Prostate gland (tissue), 2 donors: ENCODE measurements at regions of chr17 and their contacts with region 1.

Region 1: GRCh38 chr17:69523244-69523861 is 108.9 kb downstream of the MAP2K6 start:
- DNase-seq: peak; percentile 37
- H3K4me3 ChIP-seq: no peak overlapping the region
- H3K27ac ChIP-seq: no peak overlapping the region
- H3K4me1 ChIP-seq: no peaks in the 10 kb centered on the region
- H3K27me3 ChIP-seq: no peaks in the 10 kb centered on the region
- CTCF ChIP-seq: peak; percentile 42 to 77 (median 74)
- POLR2A ChIP-seq: no peak

Region 2: DNA sequence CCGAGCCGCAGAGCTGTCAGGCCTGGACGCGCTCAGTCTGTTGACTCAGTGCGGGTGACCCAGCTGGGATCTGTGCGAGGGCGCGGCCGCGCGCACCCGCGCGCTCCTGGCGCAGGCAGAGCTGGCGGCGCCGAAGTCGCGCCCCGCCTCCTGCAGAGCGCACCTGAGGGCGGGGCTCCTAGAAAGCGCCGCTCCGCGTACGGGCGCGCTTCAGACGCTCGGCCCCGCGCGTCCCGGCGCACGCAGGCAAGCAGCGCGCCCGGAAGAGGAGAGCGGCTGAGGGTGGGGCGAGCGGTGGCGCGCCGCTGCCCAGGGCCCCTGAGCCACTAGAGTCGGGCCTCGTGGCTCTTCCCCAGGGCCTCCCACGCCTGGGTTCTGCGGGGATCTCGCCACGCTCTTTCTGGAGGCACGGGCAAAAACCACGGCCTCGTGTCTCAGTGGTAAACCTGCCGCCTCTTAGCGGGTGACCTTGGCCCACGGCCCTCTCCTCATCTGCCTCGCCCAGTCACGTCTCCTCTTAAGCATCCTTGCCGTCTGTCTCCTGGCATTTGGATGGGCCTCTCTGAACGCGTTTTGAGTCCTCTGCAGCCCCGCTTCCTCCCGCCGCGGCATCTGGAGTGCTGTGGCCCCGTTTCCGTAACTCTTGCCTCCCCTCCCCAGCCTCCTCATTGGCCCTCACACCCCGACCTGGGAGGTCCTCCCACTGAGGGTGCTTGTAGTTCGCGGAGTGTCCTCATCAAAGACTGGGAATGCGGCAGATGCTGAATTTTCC is 196.1 kb before region 1 on chr17 and contains the start of gene ABCA5:
- intact Hi-C with region 1: loop called (anchors 5 kb)
- DNase-seq: peak; percentile 90
- H3K4me3 ChIP-seq: peak within 1 kb of the TSS; percentile 62 to 86
- H3K27ac ChIP-seq: peak within 1 kb of the TSS; percentile 92 to 99
- H3K4me1 ChIP-seq: no peaks in the 10 kb centered on the region
- H3K27me3 ChIP-seq: no peaks in the 10 kb centered on the region
- CTCF ChIP-seq: no peak
- POLR2A ChIP-seq: peak; percentile 86
- total RNA-seq, gene ABCA5: 31.0 to 31.3 TPM

Region 3: DNA sequence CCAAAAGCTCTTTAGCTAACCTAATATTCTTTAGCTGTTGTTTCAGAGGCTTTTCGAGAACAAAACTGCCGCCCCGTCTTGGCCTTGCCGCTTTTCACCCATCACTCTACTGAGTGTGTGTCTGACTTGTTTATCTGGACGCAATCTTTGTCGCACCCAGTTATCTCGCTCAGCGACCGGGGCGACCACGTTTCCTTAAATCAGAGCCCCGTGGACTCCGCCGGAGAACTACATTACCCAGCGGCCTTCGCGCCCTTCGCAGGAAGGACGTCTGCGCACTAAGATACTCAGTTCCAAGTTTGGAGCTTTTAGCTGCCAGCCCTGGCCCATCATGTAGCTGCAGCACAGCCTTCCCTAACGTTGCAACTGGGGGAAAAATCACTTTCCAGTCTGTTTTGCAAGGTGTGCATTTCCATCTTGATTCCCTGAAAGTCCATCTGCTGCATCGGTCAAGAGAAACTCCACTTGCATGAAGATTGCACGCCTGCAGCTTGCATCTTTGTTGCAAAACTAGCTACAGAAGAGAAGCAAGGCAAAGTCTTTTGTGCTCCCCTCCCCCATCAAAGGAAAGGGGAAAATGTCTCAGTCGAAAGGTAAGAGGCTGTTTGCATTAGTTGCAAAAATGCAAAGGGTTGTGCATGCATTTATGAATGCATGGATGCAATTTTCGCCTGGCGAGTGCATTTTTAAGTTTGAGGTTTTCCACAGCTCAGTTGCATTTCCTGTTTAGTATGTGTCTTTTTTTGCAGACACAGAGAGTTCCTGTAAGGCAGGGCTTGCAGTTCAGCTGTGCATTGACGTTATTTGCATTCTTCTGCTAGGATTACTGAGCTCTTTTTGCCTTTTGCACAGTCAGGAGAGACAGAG is 108.7 kb before region 1 on chr17 and contains the start of gene MAP2K6:
- intact Hi-C with region 1: loop called (anchors 10 kb)
- DNase-seq: peak; percentile 75
- H3K4me3 ChIP-seq: peak within 1 kb of the TSS; percentile 37 to 42
- H3K27ac ChIP-seq: peak within 1 kb of the TSS in 1 of 2 donors; percentile 46
- H3K4me1 ChIP-seq: no peaks in the 10 kb centered on the region
- H3K27me3 ChIP-seq: no peaks in the 10 kb centered on the region
- CTCF ChIP-seq: no peak
- POLR2A ChIP-seq: no peak
- total RNA-seq, gene MAP2K6: 5.4 to 14.1 TPM

Region 4: DNA sequence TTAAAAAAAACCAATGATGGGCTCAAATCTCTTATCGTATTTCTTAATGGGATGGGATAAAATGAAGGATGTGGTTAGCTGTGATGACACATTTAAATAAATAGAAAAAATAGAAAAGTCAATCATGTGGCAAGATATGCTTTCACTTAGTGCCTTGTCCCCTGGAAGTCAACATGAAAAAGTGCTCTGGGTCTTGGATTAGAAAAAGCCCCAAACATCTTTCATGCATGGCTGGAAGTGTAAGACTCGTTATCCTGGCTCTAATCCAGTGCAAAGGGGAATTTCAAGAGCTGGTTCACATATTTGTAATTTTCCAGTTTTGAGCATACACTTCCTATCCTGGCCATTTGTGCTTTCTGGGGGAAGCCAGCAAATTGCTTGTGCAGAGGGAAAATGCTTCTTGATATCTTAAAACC is 52.0 kb after region 1 on chr17:
- intact Hi-C with region 1: no loop called
- DNase-seq: no peak
- H3K4me3 ChIP-seq: no peak overlapping the region
- H3K27ac ChIP-seq: no peak overlapping the region
- H3K4me1 ChIP-seq: no peaks in the 10 kb centered on the region
- H3K27me3 ChIP-seq: no peaks in the 10 kb centered on the region
- CTCF ChIP-seq: no peak
- POLR2A ChIP-seq: no peak

Region 5: DNA sequence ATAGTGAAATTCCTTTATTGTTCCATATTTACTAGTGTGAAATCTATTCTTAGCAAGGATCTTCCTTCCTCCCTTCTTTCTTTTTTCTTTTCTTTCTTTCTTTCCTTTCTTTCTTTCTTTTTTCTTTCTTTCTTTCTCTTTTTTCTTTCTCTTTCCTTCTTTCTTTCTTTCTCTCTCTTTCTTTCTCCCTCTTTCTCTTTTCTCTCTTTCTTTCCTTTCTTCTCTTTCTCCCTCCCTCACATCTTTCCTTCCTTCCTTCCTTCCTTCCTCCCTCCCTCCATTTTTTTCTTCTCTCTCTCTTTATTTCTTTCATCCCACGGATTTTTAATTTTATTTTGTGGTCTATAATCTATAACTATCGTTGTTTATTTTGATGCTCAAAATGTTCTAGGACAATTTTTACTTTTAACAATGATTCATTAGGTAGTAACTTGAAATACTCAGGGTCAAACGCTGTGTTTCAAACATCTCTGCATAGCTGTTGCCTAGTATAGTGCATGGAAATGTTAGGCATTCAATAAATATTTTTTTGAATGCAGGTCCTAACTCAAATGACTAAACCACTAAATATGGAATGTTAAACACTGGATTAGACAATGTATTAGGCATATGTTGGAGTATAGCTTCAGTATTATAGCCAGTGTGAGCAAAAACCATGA is 69.5 kb after region 1 on chr17:
- intact Hi-C with region 1: no loop called
- DNase-seq: no peak
- H3K4me3 ChIP-seq: no peak overlapping the region
- H3K27ac ChIP-seq: no peak overlapping the region
- H3K4me1 ChIP-seq: no peaks in the 10 kb centered on the region
- H3K27me3 ChIP-seq: no peaks in the 10 kb centered on the region
- CTCF ChIP-seq: no peak
- POLR2A ChIP-seq: no peak

Region 6: DNA sequence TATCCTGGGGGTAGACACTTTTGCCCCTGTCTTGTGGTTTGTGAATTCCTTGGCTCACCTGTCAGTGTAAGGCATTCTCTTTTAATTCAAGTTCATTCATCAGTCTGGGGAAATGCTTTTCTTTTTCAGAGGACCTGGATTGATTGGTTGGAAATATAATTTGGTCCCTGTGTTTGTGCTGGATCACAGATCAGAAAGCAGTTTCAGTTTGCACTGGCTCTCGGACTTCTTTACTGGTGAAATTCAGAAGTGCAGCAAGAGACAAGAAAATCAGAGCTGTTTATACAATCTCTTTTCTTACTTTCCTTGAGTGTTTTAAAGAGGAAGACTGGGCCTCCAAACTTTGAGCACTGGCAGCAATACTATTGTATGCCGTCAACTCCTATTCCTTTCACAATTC is 389.9 kb after region 1 on chr17:
- intact Hi-C with region 1: no loop called
- DNase-seq: no peak
- H3K4me3 ChIP-seq: no peak overlapping the region
- H3K27ac ChIP-seq: peak overlapping the region in 1 of 2 donors; percentile 27
- H3K4me1 ChIP-seq: no peaks in the 10 kb centered on the region
- H3K27me3 ChIP-seq: no peaks in the 10 kb centered on the region
- CTCF ChIP-seq: peak in 1 of 4 experiments; percentile 4
- POLR2A ChIP-seq: no peak

Region 7: DNA sequence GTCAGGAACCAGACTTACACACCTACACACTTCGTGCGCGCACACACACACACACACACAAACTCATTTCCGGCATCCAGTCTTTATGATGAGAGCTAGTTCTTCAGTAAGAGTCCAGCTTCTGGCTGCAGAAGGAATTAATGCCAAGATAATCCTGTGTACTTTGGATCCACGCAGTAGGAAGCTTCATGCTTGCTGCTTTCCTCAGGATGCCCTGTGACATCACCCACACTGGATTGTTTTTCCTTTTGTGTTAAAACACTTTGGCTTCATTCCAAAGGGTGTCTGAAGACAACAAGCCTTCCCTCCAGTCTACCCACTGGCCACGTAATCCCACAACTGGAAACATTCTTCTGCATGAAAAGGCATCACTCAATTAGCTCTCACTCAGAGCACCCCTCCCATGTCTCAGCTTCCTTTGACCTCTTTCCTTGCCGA is 587.1 kb after region 1 on chr17:
- intact Hi-C with region 1: no loop called
- DNase-seq: no peak
- H3K4me3 ChIP-seq: no peak overlapping the region
- H3K27ac ChIP-seq: no peak overlapping the region
- H3K4me1 ChIP-seq: no peaks in the 10 kb centered on the region
- H3K27me3 ChIP-seq: no peaks in the 10 kb centered on the region
- CTCF ChIP-seq: no peak
- POLR2A ChIP-seq: no peak

Region 8: GRCh38 chr17:70552230-70552981 is 1029.1 kb after region 1 on chr17:
- intact Hi-C with region 1: loop called (anchors 5 kb)
- DNase-seq: peak; percentile 10
- H3K4me3 ChIP-seq: no peak overlapping the region
- H3K27ac ChIP-seq: no peak overlapping the region
- H3K4me1 ChIP-seq: no peaks in the 10 kb centered on the region
- H3K27me3 ChIP-seq: no peaks in the 10 kb centered on the region
- CTCF ChIP-seq: peak in 3 of 4 experiments; percentile 63 to 74 (median 64)
- POLR2A ChIP-seq: no peak